Activated CD8-positive, alpha-beta T cell treated with anti-CD3 and anti-CD28 coated beads, Interleukin-2, amount 10 ng/mL, durations not matched to agents 7 days and 5 days (primary cell): ENCODE measurements at regions of chr6 and their contacts with region 1.

Region 1: GRCh38 chr6:145633981-145634627 is 101.2 kb downstream of the EPM2A start:
- DNase-seq: peak; percentile 85
- ATAC-seq: peak; percentile 85
- H3K4me3 Mint-ChIP-seq: no peak overlapping the region
- H3K27ac Mint-ChIP-seq: no peak overlapping the region
- H3K4me1 Mint-ChIP-seq: no peaks in the 10 kb centered on the region
- H3K27me3 Mint-ChIP-seq: no peaks in the 10 kb centered on the region

Region 2: DNA sequence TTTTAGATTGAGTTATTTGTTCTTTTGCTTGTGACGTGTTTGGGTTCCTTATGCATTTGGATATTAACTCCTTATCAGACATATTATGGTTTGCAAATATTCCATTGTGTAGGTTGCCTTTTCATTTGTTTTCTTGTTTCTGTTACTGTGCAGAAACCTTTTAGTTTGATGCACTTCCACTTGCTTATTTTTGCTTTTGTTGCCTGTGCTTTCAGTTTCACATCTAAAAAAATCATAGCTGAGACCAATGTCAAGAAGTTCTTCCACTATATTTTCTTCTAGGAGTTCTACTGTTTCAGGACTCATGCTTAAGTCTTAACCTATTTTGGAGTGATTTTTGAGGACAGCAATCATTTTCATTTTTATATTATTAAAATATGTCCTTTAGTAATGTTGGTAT is 12.3 kb before region 1 on chr6:
- CTCF ChIA-PET with region 1: interaction called, 18 read pairs
- POLR2A ChIA-PET with region 1: no interaction called
- DNase-seq: no peak
- ATAC-seq: no peak
- H3K4me3 Mint-ChIP-seq: no peak overlapping the region
- H3K27ac Mint-ChIP-seq: no peak overlapping the region
- H3K4me1 Mint-ChIP-seq: peaks cover 2% of the 10 kb centered on the region
- H3K27me3 Mint-ChIP-seq: no peaks in the 10 kb centered on the region

Region 3: GRCh38 chr6:145648149-145648548 is 14.0 kb after region 1 on chr6:
- CTCF ChIA-PET with region 1: interaction called, 15 read pairs
- POLR2A ChIA-PET with region 1: no interaction called
- DNase-seq: no peak
- ATAC-seq: no peak
- H3K4me3 Mint-ChIP-seq: no peak overlapping the region
- H3K27ac Mint-ChIP-seq: no peak overlapping the region
- H3K4me1 Mint-ChIP-seq: no peaks in the 10 kb centered on the region
- H3K27me3 Mint-ChIP-seq: no peaks in the 10 kb centered on the region

Region 4: DNA sequence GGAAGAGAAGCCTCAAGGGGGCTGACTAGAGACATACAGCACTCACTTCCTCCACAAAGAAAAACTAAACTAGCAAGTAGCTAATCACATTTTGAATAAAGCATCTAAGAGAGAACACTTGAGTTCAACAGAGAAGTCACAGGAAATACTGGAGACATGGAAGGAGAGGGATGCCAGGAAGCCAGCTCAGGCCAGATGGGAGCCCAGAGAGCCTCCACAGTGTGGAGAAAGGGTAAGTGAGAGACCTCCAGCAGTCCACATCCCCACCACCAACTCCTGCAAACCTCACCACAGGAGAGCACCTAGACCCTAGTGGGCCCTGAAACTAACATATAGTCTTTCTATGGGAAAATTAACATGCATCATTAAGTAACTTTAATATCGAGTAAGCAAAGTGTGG is 22.0 kb after region 1 on chr6:
- CTCF ChIA-PET with region 1: interaction called, 15 read pairs
- POLR2A ChIA-PET with region 1: no interaction called
- DNase-seq: no peak
- ATAC-seq: no peak
- H3K4me3 Mint-ChIP-seq: no peak overlapping the region
- H3K27ac Mint-ChIP-seq: no peak overlapping the region
- H3K4me1 Mint-ChIP-seq: peaks cover 4% of the 10 kb centered on the region
- H3K27me3 Mint-ChIP-seq: no peaks in the 10 kb centered on the region

Region 5: GRCh38 chr6:145842693-145843546 is 208.8 kb after region 1 on chr6:
- CTCF ChIA-PET with region 1: no interaction called
- POLR2A ChIA-PET with region 1: no interaction called
- DNase-seq: no peak
- ATAC-seq: no peak
- H3K4me3 Mint-ChIP-seq: no peak overlapping the region
- H3K27ac Mint-ChIP-seq: no peak overlapping the region
- H3K4me1 Mint-ChIP-seq: no peaks in the 10 kb centered on the region
- H3K27me3 Mint-ChIP-seq: no peaks in the 10 kb centered on the region